Cardiac septum (tissue), 1 donor: ENCODE measurements at regions of chr17 and their contacts with region 1.

Region 1: GRCh38 chr17:34163646-34164045 is 91.4 kb upstream of the CCL2 start:
- DNase-seq: no peak

Region 2: GRCh38 chr17:33779225-33779591 is 384.4 kb before region 1 on chr17:
- intact Hi-C with region 1: loop called (anchors 5 kb)
- DNase-seq: no peak

Region 3: DNA sequence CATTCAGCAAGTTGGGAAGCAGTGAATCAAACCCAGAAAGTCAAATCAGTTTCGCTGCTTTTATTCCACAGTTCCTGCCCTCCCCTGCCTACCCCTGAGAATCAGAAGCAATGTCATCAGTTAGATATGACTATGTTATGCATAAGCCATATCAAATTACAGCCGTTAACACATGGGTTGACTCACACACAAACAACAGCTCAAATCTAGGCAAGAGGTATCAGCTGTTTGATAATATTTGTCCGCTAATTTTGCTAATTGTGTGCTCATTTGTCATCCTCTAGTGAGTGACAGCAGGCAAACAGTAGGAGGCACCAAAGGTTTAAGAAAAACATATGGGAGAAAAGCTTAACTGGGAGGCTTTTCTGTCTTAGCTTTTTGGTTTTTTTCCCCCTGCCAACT is 235.9 kb before region 1 on chr17:
- intact Hi-C with region 1: loop called (anchors 5 kb)
- DNase-seq: no peak